K562 (cell line): ENCODE measurements at regions of chr17 and their contacts with region 1.

Region 1: GRCh38 chr17:78140169-78140976 is 5.8 kb upstream of the C17orf99 start:
- DNase-seq: peak; percentile 96 to 99 (median 98)
- ATAC-seq: peak; percentile 85
- H3K4me3 ChIP-seq: peak overlapping the region; percentile 44
- H3K27ac ChIP-seq: peak overlapping the region; percentile 79
- H3K4me1 ChIP-seq: peaks cover 75 to 99% of the 10 kb centered on the region in 2 experiments
- H3K27me3 ChIP-seq: no peaks in the 10 kb centered on the region
- CTCF ChIP-seq: no peak
- EP300 ChIP-seq: no peak
- POLR2A ChIP-seq: peak; percentile 80
- RAD21 ChIP-seq: no peak

Region 2: DNA sequence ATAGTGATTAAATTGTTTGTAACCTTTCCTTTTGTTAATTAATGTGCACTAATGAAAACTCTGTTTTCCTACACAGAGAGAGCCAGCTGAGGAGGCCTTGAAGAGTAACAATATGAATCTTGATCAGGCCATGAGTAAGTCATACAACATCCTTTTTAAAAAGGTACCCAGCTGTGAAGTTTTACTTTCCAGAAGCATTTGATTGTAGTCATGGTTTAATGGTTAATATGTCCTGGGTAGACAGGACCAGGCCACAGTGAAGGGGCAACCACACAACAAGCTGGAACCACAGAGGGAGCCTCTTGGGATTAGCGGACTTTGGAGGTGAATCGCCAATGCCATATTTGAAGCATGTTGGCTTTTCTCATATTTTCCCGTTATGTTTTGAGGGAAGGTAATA is 67.4 kb before region 1 on chr17:
- CTCF ChIA-PET with region 1: no interaction called
- POLR2A ChIA-PET with region 1: no interaction called
- in situ Hi-C with region 1: no loop called
- intact Hi-C with region 1: no loop called
- DNase-seq: no peak
- ATAC-seq: no peak
- H3K4me3 ChIP-seq: no peak overlapping the region
- H3K27ac ChIP-seq: no peak overlapping the region
- H3K4me1 ChIP-seq: peaks cover 0 to 3% of the 10 kb centered on the region in 2 experiments; a peak in 1 of 5 replicates
- H3K27me3 ChIP-seq: no peaks in the 10 kb centered on the region
- CTCF ChIP-seq: no peak
- EP300 ChIP-seq: no peak
- POLR2A ChIP-seq: no peak
- RAD21 ChIP-seq: no peak

Region 3: DNA sequence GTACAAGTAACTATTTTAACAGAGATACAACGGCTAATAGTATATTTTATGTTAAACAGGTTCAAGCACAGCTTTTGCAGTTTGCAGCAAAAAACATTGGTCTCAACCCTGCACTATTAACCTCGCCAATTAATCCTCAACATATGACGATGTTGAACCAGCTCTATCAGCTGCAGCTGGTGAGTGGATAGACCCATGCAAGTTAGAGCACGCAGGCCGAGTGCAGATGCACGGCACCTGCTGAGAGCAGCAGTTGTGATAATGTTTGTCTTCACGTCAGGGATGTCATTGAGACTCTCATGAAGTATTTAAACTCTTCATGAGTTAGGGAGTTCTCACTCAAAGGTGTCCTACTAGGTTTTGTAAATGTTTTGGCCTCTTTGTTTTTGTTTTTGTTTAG is 57.4 kb before region 1 on chr17:
- CTCF ChIA-PET with region 1: no interaction called
- POLR2A ChIA-PET with region 1: no interaction called
- in situ Hi-C with region 1: no loop called
- intact Hi-C with region 1: loop called (anchors 2 kb)
- DNase-seq: peak in 1 of 4 experiments; percentile 29
- ATAC-seq: no peak
- H3K4me3 ChIP-seq: no peak overlapping the region
- H3K27ac ChIP-seq: 0 out of 3 replicates have a peak overlapping the region, but pooled peaks have one; percentile 20
- H3K4me1 ChIP-seq: peaks cover 21 to 23% of the 10 kb centered on the region in 2 experiments; a peak in 4 of 5 replicates
- H3K27me3 ChIP-seq: no peaks in the 10 kb centered on the region
- CTCF ChIP-seq: no peak
- EP300 ChIP-seq: no peak
- POLR2A ChIP-seq: no peak
- RAD21 ChIP-seq: no peak

Region 4: GRCh38 chr17:78128551-78129350 is 11.6 kb before region 1 on chr17 and contains the start of gene TMC6:
- CTCF ChIA-PET with region 1: no interaction called
- POLR2A ChIA-PET with region 1: interaction called, 8 read pairs
- in situ Hi-C with region 1: no loop called
- intact Hi-C with region 1: loop called (anchors 1 kb)
- DNase-seq: peak; percentile 93 to 99 (median 96)
- ATAC-seq: peak; percentile 75
- H3K4me3 ChIP-seq: peak within 1 kb of the TSS; percentile 98
- H3K27ac ChIP-seq: peak within 1 kb of the TSS; percentile 81
- H3K4me1 ChIP-seq: peaks cover 32 to 92% of the 10 kb centered on the region in 2 experiments
- H3K27me3 ChIP-seq: no peaks in the 10 kb centered on the region
- CTCF ChIP-seq: no peak
- EP300 ChIP-seq: peak; percentile 92
- POLR2A ChIP-seq: peak; percentile 81
- RAD21 ChIP-seq: no peak
- polyA plus RNA-seq, gene TMC6: 4.1 to 8.2 TPM

Region 5: GRCh38 chr17:78176548-78177025 is 36.2 kb after region 1 on chr17:
- CTCF ChIA-PET with region 1: no interaction called
- POLR2A ChIA-PET with region 1: interaction called, 8 read pairs
- in situ Hi-C with region 1: no loop called
- intact Hi-C with region 1: loop called (anchors 5 kb)
- DNase-seq: peak; percentile 71 to 86 (median 76)
- ATAC-seq: peak; percentile 90
- H3K4me3 ChIP-seq: no peak overlapping the region
- H3K27ac ChIP-seq: peak overlapping the region; percentile 31; the same call in 1 of the 3 replicates
- H3K4me1 ChIP-seq: peaks cover 7 to 43% of the 10 kb centered on the region in 2 experiments
- H3K27me3 ChIP-seq: no peaks in the 10 kb centered on the region
- CTCF ChIP-seq: peak; percentile 92 to 97 (median 94)
- EP300 ChIP-seq: no peak
- POLR2A ChIP-seq: peak; percentile 53
- RAD21 ChIP-seq: peak; percentile 72 to 86

Region 6: DNA sequence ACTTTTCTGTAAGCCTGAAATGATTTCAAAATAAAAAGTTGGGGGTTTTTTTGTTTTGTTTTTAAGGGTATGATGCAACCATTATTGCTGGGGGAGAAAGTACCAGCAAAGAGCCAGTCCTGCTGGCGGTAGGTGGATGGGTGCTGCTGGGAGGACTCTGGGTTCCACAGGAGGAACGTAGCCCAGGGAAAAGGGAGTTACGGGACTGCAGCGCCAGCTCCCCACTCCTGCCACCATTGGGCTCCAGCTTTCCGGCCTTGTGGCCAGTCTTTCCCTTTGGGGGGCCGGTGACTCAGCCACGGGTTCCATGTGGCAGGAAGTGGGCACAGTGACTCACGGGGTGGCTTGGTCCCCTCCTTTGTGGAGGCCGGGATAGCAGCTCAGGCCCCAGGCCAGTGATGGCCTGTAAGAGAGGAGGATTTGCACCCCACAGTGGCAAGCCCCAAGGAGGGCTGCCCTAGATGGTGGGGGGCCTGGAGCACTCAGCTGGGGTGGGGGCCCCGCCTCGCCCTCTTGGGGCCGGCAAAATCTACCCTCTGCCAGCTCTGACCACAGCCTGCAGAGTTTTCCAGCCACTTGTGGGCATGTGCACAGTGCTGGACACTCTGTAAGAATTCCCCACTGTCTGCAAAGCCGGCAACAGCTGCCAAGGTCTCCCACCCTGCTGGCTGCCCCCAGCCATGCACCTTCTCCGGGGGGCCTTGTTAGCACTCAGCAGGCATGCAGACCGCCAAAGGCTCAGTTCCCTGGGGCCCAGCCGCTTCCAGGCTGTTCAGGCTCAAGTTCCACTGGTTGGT is 189.1 kb after region 1 on chr17:
- CTCF ChIA-PET with region 1: no interaction called
- POLR2A ChIA-PET with region 1: no interaction called
- in situ Hi-C with region 1: no loop called
- intact Hi-C with region 1: no loop called
- DNase-seq: no peak
- ATAC-seq: peak; percentile 13; the same call in 1 of the 3 replicates
- H3K4me3 ChIP-seq: no peak overlapping the region
- H3K27ac ChIP-seq: no peak overlapping the region
- H3K4me1 ChIP-seq: peaks cover 0 to 22% of the 10 kb centered on the region in 2 experiments; a peak in 4 of 5 replicates
- H3K27me3 ChIP-seq: no peaks in the 10 kb centered on the region
- CTCF ChIP-seq: no peak
- EP300 ChIP-seq: no peak
- POLR2A ChIP-seq: no peak
- RAD21 ChIP-seq: no peak